HepG2 (cell line): ENCODE measurements at regions of chr4 and their contacts with region 1.

Region 1: GRCh38 chr4:83503974-83504373 is 19.1 kb upstream of the ABRAXAS1 start:
- DNase-seq: no peak
- ATAC-seq: no peak
- H3K4me3 ChIP-seq: no peak overlapping the region
- H3K27ac ChIP-seq: no peak overlapping the region
- H3K4me1 ChIP-seq: no peaks in the 10 kb centered on the region
- H3K27me3 ChIP-seq: peaks cover 0 to 5% of the 10 kb centered on the region in 2 experiments; a peak in 2 of 5 replicates
- CTCF ChIP-seq: no peak
- EP300 ChIP-seq: no peak
- POLR2A ChIP-seq: no peak
- RAD21 ChIP-seq: no peak

Region 2: DNA sequence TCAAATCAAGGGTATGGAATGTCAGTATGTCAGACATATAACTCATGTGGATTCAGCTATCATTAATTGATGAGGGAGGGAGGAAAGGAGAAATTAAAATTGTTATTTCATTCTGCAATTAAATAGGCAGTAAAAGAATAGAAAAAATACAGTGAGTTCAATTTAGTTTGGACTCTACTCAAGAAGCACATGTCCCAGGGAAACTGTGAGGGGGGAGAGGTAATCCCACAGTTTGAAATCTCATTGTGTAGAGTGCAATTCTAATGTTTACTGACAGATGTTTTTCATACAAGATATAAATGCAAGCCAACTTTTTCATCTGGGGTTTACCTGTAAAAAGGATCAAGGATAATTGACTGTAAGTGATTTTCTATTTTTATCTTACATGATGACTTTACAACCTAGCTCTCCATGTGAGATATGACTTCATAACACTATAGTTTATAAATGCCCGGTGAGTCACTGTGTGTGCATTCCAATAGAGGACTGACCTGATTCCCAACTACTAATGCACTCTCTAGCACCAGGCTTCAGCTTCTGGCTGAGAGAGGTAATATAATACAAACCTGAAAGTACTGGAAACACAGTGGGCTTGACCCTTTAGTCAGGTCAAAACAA is 670.2 kb before region 1 on chr4:
- CTCF ChIA-PET with region 1: no interaction called
- POLR2A ChIA-PET with region 1: no interaction called
- in situ Hi-C with region 1: no loop called
- intact Hi-C with region 1: no loop called
- DNase-seq: peak; percentile 27
- ATAC-seq: peak; percentile 75
- H3K4me3 ChIP-seq: no peak overlapping the region
- H3K27ac ChIP-seq: no peak overlapping the region
- H3K4me1 ChIP-seq: no peaks in the 10 kb centered on the region
- H3K27me3 ChIP-seq: no peaks in the 10 kb centered on the region
- CTCF ChIP-seq: no peak
- EP300 ChIP-seq: no peak
- POLR2A ChIP-seq: no peak
- RAD21 ChIP-seq: no peak

Region 3: DNA sequence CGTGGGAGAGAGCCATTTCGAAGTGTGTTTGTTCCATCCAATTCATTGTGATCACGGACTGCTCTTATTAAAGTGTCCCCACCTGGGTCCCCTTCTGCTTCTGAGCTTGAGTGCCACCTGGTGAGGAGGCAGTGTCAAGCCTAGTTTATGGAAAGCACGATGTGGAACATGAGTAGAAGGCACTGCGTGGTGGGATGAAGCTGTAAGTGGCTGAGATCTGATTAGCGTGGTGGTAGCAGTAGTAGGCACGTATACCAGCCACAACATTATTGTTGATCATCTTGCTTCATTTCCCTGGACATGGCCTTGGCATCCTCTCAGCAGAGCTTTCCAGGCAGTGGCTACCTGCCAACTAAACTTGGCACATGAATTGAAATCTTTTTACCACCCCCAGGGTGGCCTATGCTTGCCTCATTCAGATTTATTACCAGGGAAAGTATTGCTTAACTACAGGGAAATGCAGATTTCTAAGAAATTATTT is 78.4 kb after region 1 on chr4:
- CTCF ChIA-PET with region 1: no interaction called
- POLR2A ChIA-PET with region 1: no interaction called
- in situ Hi-C with region 1: no loop called
- intact Hi-C with region 1: loop called (anchors 1 kb)
- DNase-seq: no peak
- ATAC-seq: peak; percentile 64
- H3K4me3 ChIP-seq: no peak overlapping the region
- H3K27ac ChIP-seq: no peak overlapping the region
- H3K4me1 ChIP-seq: peaks cover 7% of the 10 kb centered on the region
- H3K27me3 ChIP-seq: no peaks in the 10 kb centered on the region; a peak in 1 of 5 replicates
- CTCF ChIP-seq: peak; percentile 52
- EP300 ChIP-seq: no peak
- POLR2A ChIP-seq: no peak
- RAD21 ChIP-seq: no peak

Region 4: DNA sequence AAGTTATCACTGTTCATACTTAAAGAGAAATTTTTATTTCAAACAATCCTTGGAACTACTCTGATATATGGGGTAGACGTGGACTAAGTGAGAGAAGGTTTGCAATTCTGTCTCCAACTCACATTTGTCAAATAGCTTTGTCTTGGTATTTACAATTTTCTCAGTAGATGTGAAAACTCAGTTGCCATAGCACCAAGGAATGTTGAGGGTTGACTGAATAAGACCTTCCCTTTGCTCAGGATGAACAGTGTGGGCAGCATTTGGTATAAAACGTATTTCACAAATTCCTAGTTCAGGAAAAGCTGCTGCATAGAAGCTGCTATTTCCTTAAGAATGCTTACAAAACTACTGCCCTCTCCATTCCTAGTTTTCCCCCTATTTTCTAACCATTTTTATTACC is 595.6 kb after region 1 on chr4:
- CTCF ChIA-PET with region 1: no interaction called
- POLR2A ChIA-PET with region 1: no interaction called
- in situ Hi-C with region 1: no loop called
- intact Hi-C with region 1: no loop called
- DNase-seq: no peak
- ATAC-seq: no peak
- H3K4me3 ChIP-seq: no peak overlapping the region
- H3K27ac ChIP-seq: no peak overlapping the region
- H3K4me1 ChIP-seq: no peaks in the 10 kb centered on the region
- H3K27me3 ChIP-seq: no peaks in the 10 kb centered on the region
- CTCF ChIP-seq: no peak
- EP300 ChIP-seq: no peak
- POLR2A ChIP-seq: no peak
- RAD21 ChIP-seq: no peak